ENCODE measurements at regions of chr3 and their contacts with region 1.

Region 1: GRCh38 chr3:150763122-150763841 is at the start of gene SIAH2:
- DNase-seq: peak; percentile 94
- ATAC-seq: peak; percentile 74
- H3K4me3 Mint-ChIP-seq: peak within 1 kb of the TSS; percentile 99
- H3K27ac Mint-ChIP-seq: peak within 1 kb of the TSS; percentile 100
- H3K4me1 Mint-ChIP-seq: peaks cover 77% of the 10 kb centered on the region
- H3K27me3 Mint-ChIP-seq: no peaks in the 10 kb centered on the region
- CTCF ChIP-seq: no peak
- total RNA-seq, gene SIAH2: 44.5 and 44.7 TPM in 2 replicates

Region 2: GRCh38 chr3:149245738-149246451 is 1517.4 kb before region 1 on chr3:
- CTCF ChIA-PET with region 1: no interaction called
- POLR2A ChIA-PET with region 1: no interaction called
- intact Hi-C with region 1: loop called (anchors 10 kb)
- DNase-seq: no peak
- ATAC-seq: peak; percentile 61
- H3K4me3 Mint-ChIP-seq: peak overlapping the region; percentile 57
- H3K27ac Mint-ChIP-seq: peak overlapping the region; percentile 69
- H3K4me1 Mint-ChIP-seq: peaks cover 68% of the 10 kb centered on the region
- H3K27me3 Mint-ChIP-seq: no peaks in the 10 kb centered on the region
- CTCF ChIP-seq: no peak

Region 3: GRCh38 chr3:150408221-150409102 is 354.8 kb before region 1 on chr3 and contains the start of gene TSC22D2:
- CTCF ChIA-PET with region 1: no interaction called
- POLR2A ChIA-PET with region 1: interaction called, 18 read pairs
- intact Hi-C with region 1: loop called (anchors 1 kb)
- DNase-seq: peak; percentile 99
- ATAC-seq: peak; percentile 71
- H3K4me3 Mint-ChIP-seq: peak within 1 kb of the TSS; percentile 94
- H3K27ac Mint-ChIP-seq: peak within 1 kb of the TSS; percentile 99
- H3K4me1 Mint-ChIP-seq: peaks cover 34% of the 10 kb centered on the region
- H3K27me3 Mint-ChIP-seq: no peaks in the 10 kb centered on the region
- CTCF ChIP-seq: no peak
- total RNA-seq, gene TSC22D2: 35.9 and 38.9 TPM in 2 replicates

Region 4: GRCh38 chr3:150681057-150681456 is 82.2 kb before region 1 on chr3:
- CTCF ChIA-PET with region 1: no interaction called
- POLR2A ChIA-PET with region 1: interaction called, 4 read pairs
- intact Hi-C with region 1: loop called (anchors 2 kb)
- DNase-seq: no peak
- ATAC-seq: peak; percentile 95
- H3K4me3 Mint-ChIP-seq: peak overlapping the region; percentile 80
- H3K27ac Mint-ChIP-seq: peak overlapping the region; percentile 66
- H3K4me1 Mint-ChIP-seq: peaks cover 29% of the 10 kb centered on the region
- H3K27me3 Mint-ChIP-seq: no peaks in the 10 kb centered on the region
- CTCF ChIP-seq: no peak

Region 5: GRCh38 chr3:150743508-150743907 is 19.8 kb before region 1 on chr3:
- CTCF ChIA-PET with region 1: interaction called, 7 read pairs
- POLR2A ChIA-PET with region 1: interaction called, 65 read pairs
- intact Hi-C with region 1: loop called (anchors 1 kb)
- DNase-seq: no peak
- ATAC-seq: no peak
- H3K4me3 Mint-ChIP-seq: peak overlapping the region; percentile 29
- H3K27ac Mint-ChIP-seq: peak overlapping the region; percentile 74
- H3K4me1 Mint-ChIP-seq: peaks cover 97% of the 10 kb centered on the region
- H3K27me3 Mint-ChIP-seq: no peaks in the 10 kb centered on the region
- CTCF ChIP-seq: no peak

Region 6: DNA sequence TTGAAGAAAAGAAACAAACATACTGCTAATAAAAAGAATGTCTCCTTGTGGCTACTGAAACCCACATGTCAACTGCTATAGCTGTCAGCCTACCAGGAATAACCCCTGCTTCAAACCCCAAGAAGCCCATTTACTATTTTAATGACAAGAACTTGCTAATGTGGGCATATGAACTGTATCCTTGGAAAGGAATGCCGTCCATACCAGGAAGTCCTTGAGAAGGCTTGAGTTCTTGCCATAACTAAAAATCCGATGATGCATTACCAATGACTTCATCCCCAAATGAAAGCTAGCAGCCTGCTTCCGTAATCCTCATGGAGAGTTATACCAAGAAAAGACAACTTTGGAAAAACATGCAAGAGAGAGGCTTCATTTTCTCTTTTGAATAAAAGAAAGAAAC is 107.1 kb after region 1 on chr3:
- CTCF ChIA-PET with region 1: no interaction called
- POLR2A ChIA-PET with region 1: interaction called, 5 read pairs
- intact Hi-C with region 1: loop called (anchors 1 kb)
- DNase-seq: no peak
- ATAC-seq: no peak
- H3K4me3 Mint-ChIP-seq: no peak overlapping the region
- H3K27ac Mint-ChIP-seq: no peak overlapping the region
- H3K4me1 Mint-ChIP-seq: peaks cover under 1% of the 10 kb centered on the region
- H3K27me3 Mint-ChIP-seq: peaks cover 4% of the 10 kb centered on the region
- CTCF ChIP-seq: no peak

Region 7: GRCh38 chr3:152508705-152509104 is 1745.4 kb after region 1 on chr3:
- CTCF ChIA-PET with region 1: no interaction called
- POLR2A ChIA-PET with region 1: no interaction called
- intact Hi-C with region 1: loop called (anchors 10 kb)
- DNase-seq: no peak
- ATAC-seq: no peak
- H3K4me3 Mint-ChIP-seq: peak overlapping the region; percentile 6
- H3K27ac Mint-ChIP-seq: peak overlapping the region; percentile 82
- H3K4me1 Mint-ChIP-seq: peaks cover 88% of the 10 kb centered on the region
- H3K27me3 Mint-ChIP-seq: no peaks in the 10 kb centered on the region
- CTCF ChIP-seq: no peak